Gastrocnemius medialis (tissue), 4 donors: ENCODE measurements at regions of chr5 and their contacts with region 1.

Region 1: GRCh38 chr5:67693956-67694809 is 497.6 kb upstream of the CD180 start:
- DNase-seq: peak; percentile 94 to 98
- ATAC-seq: peak; percentile 95
- H3K4me3 ChIP-seq: peak overlapping the region in 1 of 4 donors; percentile 22
- H3K27ac ChIP-seq: peak overlapping the region; percentile 88 to 93 (median 90)
- H3K4me1 ChIP-seq: peaks cover 29 to 30% of the 10 kb centered on the region in 2 donors
- H3K27me3 ChIP-seq: no peaks in the 10 kb centered on the region
- CTCF ChIP-seq: peak in 1 of 5 experiments; percentile 18
- POLR2A ChIP-seq: peak; percentile 52 to 84

Region 2: GRCh38 chr5:67476531-67476930 is 217.7 kb before region 1 on chr5:
- in situ Hi-C with region 1: loop called in 3 of 4 experiments (anchors 5 to 25 kb)
- intact Hi-C with region 1: loop called (anchors 1 kb)
- DNase-seq: no peak
- ATAC-seq: no peak
- H3K4me3 ChIP-seq: no peak overlapping the region
- H3K27ac ChIP-seq: peak overlapping the region; percentile 87 to 95 (median 90)
- H3K4me1 ChIP-seq: peaks cover 4 to 11% of the 10 kb centered on the region in 2 donors
- H3K27me3 ChIP-seq: no peaks in the 10 kb centered on the region
- CTCF ChIP-seq: no peak
- POLR2A ChIP-seq: no peak

Region 3: DNA sequence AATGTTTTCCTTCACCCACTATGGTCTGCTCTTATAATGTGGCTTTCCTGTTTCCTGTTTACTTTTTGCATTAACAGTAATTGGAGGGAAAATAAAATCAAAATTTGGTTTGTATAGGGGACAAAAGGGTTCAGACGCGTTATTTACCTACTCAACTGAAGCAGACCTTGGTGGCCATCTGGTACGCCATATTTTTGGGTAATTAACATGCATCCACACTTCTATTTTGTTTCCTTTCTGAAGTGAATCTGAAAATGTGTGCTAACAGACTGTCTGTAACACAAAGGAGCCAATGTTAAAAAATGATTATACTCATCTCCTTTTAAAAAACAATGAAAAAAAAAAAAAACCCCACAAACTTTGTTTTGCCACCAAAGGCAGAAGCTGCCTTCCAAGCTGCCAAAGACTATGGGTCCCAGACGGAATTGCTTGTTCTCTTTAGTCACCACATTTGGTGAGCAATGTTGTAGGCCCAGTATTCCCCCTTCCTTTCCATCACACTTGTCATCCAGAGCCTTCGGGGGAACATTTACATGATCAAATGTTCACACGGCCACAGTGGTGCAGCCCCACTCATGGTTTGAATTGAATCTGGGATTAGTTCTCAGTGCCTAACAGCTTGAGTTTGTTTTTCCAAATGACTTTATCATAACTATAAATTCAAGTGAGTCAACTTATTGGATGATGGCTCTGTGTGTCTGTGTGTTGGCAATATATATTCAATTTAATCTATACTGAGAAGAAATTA is 173.8 kb before region 1 on chr5:
- in situ Hi-C with region 1: no loop called
- intact Hi-C with region 1: no loop called
- DNase-seq: no peak
- ATAC-seq: no peak
- H3K4me3 ChIP-seq: no peak overlapping the region
- H3K27ac ChIP-seq: no peak overlapping the region
- H3K4me1 ChIP-seq: no peaks in the 10 kb centered on the region
- H3K27me3 ChIP-seq: no peaks in the 10 kb centered on the region
- CTCF ChIP-seq: no peak
- POLR2A ChIP-seq: no peak

Region 4: GRCh38 chr5:67537439-67538148 is 156.6 kb before region 1 on chr5:
- in situ Hi-C with region 1: no loop called
- intact Hi-C with region 1: no loop called
- DNase-seq: no peak
- ATAC-seq: peak; percentile 10 to 54
- H3K4me3 ChIP-seq: peak overlapping the region in 2 of 4 donors; percentile 19 to 47
- H3K27ac ChIP-seq: peak overlapping the region; percentile 66 to 87 (median 72)
- H3K4me1 ChIP-seq: peaks cover 12 to 24% of the 10 kb centered on the region in 2 donors
- H3K27me3 ChIP-seq: no peaks in the 10 kb centered on the region
- CTCF ChIP-seq: no peak
- POLR2A ChIP-seq: no peak

Region 5: GRCh38 chr5:67773411-67774266 is 79.5 kb after region 1 on chr5:
- in situ Hi-C with region 1: no loop called
- intact Hi-C with region 1: loop called (anchors 2 kb)
- DNase-seq: no peak
- ATAC-seq: no peak
- H3K4me3 ChIP-seq: no peak overlapping the region
- H3K27ac ChIP-seq: peak overlapping the region; percentile 74 to 82 (median 78)
- H3K4me1 ChIP-seq: peaks cover 30 to 32% of the 10 kb centered on the region in 2 donors
- H3K27me3 ChIP-seq: no peaks in the 10 kb centered on the region
- CTCF ChIP-seq: no peak
- POLR2A ChIP-seq: no peak

Region 6: DNA sequence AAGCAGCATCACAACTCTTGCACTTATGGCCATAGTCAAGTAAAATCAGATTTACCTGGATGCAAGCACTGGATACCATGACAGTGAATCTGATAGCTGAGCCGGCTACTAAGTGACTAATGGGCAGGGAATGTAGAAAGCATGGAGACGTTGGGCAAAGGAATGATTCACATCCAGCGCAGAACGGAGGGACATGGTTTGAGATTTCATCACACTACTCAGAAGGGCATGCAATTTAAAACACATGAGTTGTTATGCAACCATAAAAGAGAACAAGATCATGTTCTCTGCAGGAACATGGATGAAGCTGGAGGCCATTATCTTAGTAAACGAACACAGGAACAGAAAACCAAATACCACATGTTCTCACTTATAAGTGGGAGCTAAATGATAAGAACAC is 352.3 kb after region 1 on chr5:
- in situ Hi-C with region 1: no loop called
- intact Hi-C with region 1: loop called (anchors 5 kb)
- DNase-seq: peak; percentile 54 to 84
- ATAC-seq: peak; percentile 97 to 100
- H3K4me3 ChIP-seq: no peak overlapping the region
- H3K27ac ChIP-seq: peak overlapping the region; percentile 63 to 74 (median 64)
- H3K4me1 ChIP-seq: peaks cover 0 to 3% of the 10 kb centered on the region in 2 donors
- H3K27me3 ChIP-seq: no peaks in the 10 kb centered on the region
- CTCF ChIP-seq: peak in 1 of 5 experiments; percentile 22
- POLR2A ChIP-seq: no peak

Region 7: GRCh38 chr5:68252673-68253623 is 558.8 kb after region 1 on chr5:
- in situ Hi-C with region 1: loop called in 1 of 4 experiments (anchors 25 kb)
- intact Hi-C with region 1: loop called (anchors 10 kb)
- DNase-seq: peak; percentile 36 to 61
- ATAC-seq: peak; percentile 77 to 83
- H3K4me3 ChIP-seq: peak overlapping the region in 3 of 4 donors; percentile 6 to 28 (median 19)
- H3K27ac ChIP-seq: peak overlapping the region; percentile 67 to 75 (median 74)
- H3K4me1 ChIP-seq: peaks cover 80 to 88% of the 10 kb centered on the region in 2 donors
- H3K27me3 ChIP-seq: no peaks in the 10 kb centered on the region
- CTCF ChIP-seq: peak; percentile 56 to 86 (median 73)
- POLR2A ChIP-seq: no peak

Region 8: DNA sequence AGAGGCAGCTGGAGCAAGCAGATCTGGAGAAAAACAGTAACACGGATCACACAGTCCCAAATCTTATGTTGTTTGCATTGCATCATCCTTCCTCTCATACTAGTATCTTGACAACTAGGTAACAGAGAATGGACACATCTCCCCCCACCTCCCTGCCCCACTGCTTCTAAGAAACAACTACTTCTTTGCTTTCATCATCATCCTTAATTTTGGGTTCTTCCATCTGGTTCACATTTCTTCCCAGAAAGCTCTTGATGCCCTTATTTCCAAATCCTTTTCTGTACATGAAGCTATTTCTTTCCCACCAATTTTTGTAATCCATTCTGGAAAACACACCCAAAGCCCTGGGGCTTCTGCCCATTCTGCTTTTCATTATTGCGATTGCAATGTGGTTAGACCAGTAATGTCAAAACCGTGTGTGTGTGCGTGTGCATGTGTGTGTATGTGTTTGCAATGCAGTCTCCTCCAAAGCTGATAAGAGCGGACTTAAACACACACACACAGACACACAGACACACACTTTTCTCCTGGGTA is 1144.9 kb after region 1 on chr5:
- in situ Hi-C with region 1: no loop called
- intact Hi-C with region 1: no loop called
- DNase-seq: peak; percentile 9 to 55
- ATAC-seq: peak; percentile 51 to 63
- H3K4me3 ChIP-seq: no peak overlapping the region
- H3K27ac ChIP-seq: no peak overlapping the region
- H3K4me1 ChIP-seq: no peaks in the 10 kb centered on the region
- H3K27me3 ChIP-seq: no peaks in the 10 kb centered on the region
- CTCF ChIP-seq: no peak
- POLR2A ChIP-seq: no peak